Naive thymus-derived CD4-positive, alpha-beta T cell (primary cell): ENCODE measurements at regions of chr20 and their contacts with region 1.

Region 1: DNA sequence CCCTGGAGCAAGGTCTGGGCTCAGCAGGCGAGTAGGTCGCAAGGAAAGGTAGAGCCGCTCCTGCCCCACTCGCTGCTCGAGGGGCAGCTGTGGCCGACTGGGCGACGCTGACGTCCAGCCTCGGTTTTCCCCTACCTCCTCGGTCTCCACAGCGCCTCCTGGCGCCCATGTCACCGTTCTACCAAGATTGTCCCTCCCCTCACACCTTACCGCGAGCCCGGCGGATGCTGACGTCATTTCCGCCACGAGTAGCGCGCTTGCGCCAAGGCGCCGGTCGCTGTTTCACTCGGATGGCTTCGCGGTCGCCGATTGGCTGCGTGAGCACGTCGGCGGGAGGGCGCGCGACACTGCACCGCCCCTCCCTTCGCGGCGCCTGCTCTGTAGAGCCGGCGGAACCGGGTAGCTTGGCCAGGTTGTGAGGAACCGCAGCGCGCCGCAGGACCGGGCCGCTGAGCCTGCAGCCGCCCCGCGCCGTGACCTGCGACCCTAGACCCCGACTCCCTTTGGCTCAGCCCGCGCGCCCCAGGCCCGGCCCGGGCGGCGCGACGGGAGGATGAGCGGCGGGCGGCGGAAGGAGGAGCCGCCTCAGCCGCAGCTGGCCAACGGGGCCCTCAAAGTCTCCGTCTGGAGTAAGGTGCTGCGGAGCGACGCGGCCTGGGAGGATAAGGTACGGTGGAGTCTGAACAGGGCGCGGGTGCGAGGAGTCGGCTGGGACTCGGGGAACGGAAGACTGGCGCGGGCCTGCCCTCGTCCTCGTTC is at the start of gene RAB5IF:
- DNase-seq: peak; percentile 98 to 99 (median 99)
- ATAC-seq: peak; percentile 94
- H3K4me3 ChIP-seq: peak within 1 kb of the TSS; percentile 89
- H3K4me3 Mint-ChIP-seq: peak within 1 kb of the TSS; percentile 95 to 99 (median 96)
- H3K27ac ChIP-seq: peak within 1 kb of the TSS; percentile 91
- H3K27ac Mint-ChIP-seq: peak within 1 kb of the TSS; percentile 94 to 99 (median 96)
- H3K4me1 ChIP-seq: peaks cover 16 to 20% of the 10 kb centered on the region in 2 donors
- H3K4me1 Mint-ChIP-seq: peaks cover 12 to 38% (median 28%) of the 10 kb centered on the region in 7 donors
- H3K27me3 ChIP-seq: no peaks in the 10 kb centered on the region
- H3K27me3 Mint-ChIP-seq: peaks cover 0 to 3% (median 0%) of the 10 kb centered on the region in 5 donors
- total RNA-seq, gene RAB5IF: 47.9 to 100 (median 53.1) TPM

Region 2: GRCh38 chr20:34970193-34970840 is 1635.3 kb before region 1 on chr20:
- CTCF ChIA-PET with region 1: no interaction called
- POLR2A ChIA-PET with region 1: no interaction called
- intact Hi-C with region 1: no loop called
- DNase-seq: no peak
- ATAC-seq: no peak
- H3K4me3 ChIP-seq: no peak overlapping the region
- H3K4me3 Mint-ChIP-seq: no peak overlapping the region
- H3K27ac ChIP-seq: no peak overlapping the region
- H3K27ac Mint-ChIP-seq: no peak overlapping the region
- H3K4me1 ChIP-seq: no peaks in the 10 kb centered on the region
- H3K4me1 Mint-ChIP-seq: no peaks in the 10 kb centered on the region
- H3K27me3 ChIP-seq: no peaks in the 10 kb centered on the region
- H3K27me3 Mint-ChIP-seq: peaks cover 0 to 4% (median 2%) of the 10 kb centered on the region in 5 donors

Region 3: GRCh38 chr20:36184816-36185776 is 420.5 kb before region 1 on chr20:
- CTCF ChIA-PET with region 1: no interaction called
- POLR2A ChIA-PET with region 1: no interaction called
- intact Hi-C with region 1: no loop called
- DNase-seq: no peak
- ATAC-seq: no peak
- H3K4me3 ChIP-seq: no peak overlapping the region
- H3K4me3 Mint-ChIP-seq: no peak overlapping the region
- H3K27ac ChIP-seq: no peak overlapping the region
- H3K27ac Mint-ChIP-seq: no peak overlapping the region
- H3K4me1 ChIP-seq: no peaks in the 10 kb centered on the region
- H3K4me1 Mint-ChIP-seq: no peaks in the 10 kb centered on the region
- H3K27me3 ChIP-seq: no peaks in the 10 kb centered on the region
- H3K27me3 Mint-ChIP-seq: peaks cover 0 to 2% (median 0%) of the 10 kb centered on the region in 5 donors

Region 4: GRCh38 chr20:36199345-36200257 is 406.0 kb before region 1 on chr20:
- CTCF ChIA-PET with region 1: no interaction called
- POLR2A ChIA-PET with region 1: no interaction called
- intact Hi-C with region 1: loop called in 1 of 2 experiments (anchors 2 kb)
- DNase-seq: peak; percentile 31 to 74 (median 57)
- ATAC-seq: peak; percentile 83
- H3K4me3 ChIP-seq: no peak overlapping the region
- H3K4me3 Mint-ChIP-seq: no peak overlapping the region
- H3K27ac ChIP-seq: no peak overlapping the region
- H3K27ac Mint-ChIP-seq: no peak overlapping the region
- H3K4me1 ChIP-seq: peaks cover 0 to 5% of the 10 kb centered on the region in 2 donors
- H3K4me1 Mint-ChIP-seq: peaks cover 3 to 6% (median 5%) of the 10 kb centered on the region in 7 donors
- H3K27me3 ChIP-seq: no peaks in the 10 kb centered on the region
- H3K27me3 Mint-ChIP-seq: peaks cover 9 to 21% (median 12%) of the 10 kb centered on the region in 5 donors

Region 5: GRCh38 chr20:36562724-36563123 is 42.9 kb before region 1 on chr20:
- CTCF ChIA-PET with region 1: interaction called, 12 read pairs
- POLR2A ChIA-PET with region 1: interaction called, 93 read pairs
- intact Hi-C with region 1: no loop called
- DNase-seq: no peak
- ATAC-seq: no peak
- H3K4me3 ChIP-seq: no peak overlapping the region
- H3K4me3 Mint-ChIP-seq: no peak overlapping the region
- H3K27ac ChIP-seq: no peak overlapping the region
- H3K27ac Mint-ChIP-seq: peak overlapping the region in 1 of 9 donors; percentile 21
- H3K4me1 ChIP-seq: peaks cover 0 to 10% of the 10 kb centered on the region in 2 donors
- H3K4me1 Mint-ChIP-seq: peaks cover 0 to 5% (median 0%) of the 10 kb centered on the region in 7 donors
- H3K27me3 ChIP-seq: no peaks in the 10 kb centered on the region
- H3K27me3 Mint-ChIP-seq: no peaks in the 10 kb centered on the region

Region 6: GRCh38 chr20:36591854-36592641 is 13.5 kb before region 1 on chr20:
- CTCF ChIA-PET with region 1: interaction called, 20 read pairs
- POLR2A ChIA-PET with region 1: interaction called, 84 read pairs
- intact Hi-C with region 1: loop called (anchors 1 kb)
- DNase-seq: peak in 6 of 9 donors; percentile 23 to 61 (median 42)
- ATAC-seq: peak; percentile 40
- H3K4me3 ChIP-seq: no peak overlapping the region
- H3K4me3 Mint-ChIP-seq: peak overlapping the region in 7 of 10 donors; percentile 22 to 60 (median 42)
- H3K27ac ChIP-seq: peak overlapping the region; percentile 56
- H3K27ac Mint-ChIP-seq: peak overlapping the region; percentile 42 to 90 (median 88)
- H3K4me1 ChIP-seq: peaks cover 14 to 16% of the 10 kb centered on the region in 2 donors
- H3K4me1 Mint-ChIP-seq: peaks cover 33 to 61% (median 48%) of the 10 kb centered on the region in 7 donors
- H3K27me3 ChIP-seq: no peaks in the 10 kb centered on the region
- H3K27me3 Mint-ChIP-seq: no peaks in the 10 kb centered on the region

Region 7: GRCh38 chr20:36745927-36746659 is 140.5 kb after region 1 on chr20 and contains the start of gene NDRG3:
- CTCF ChIA-PET with region 1: no interaction called
- POLR2A ChIA-PET with region 1: interaction called, 5 read pairs
- intact Hi-C with region 1: loop called (anchors 1 kb)
- DNase-seq: peak; percentile 81 to 93 (median 91)
- ATAC-seq: peak; percentile 100
- H3K4me3 ChIP-seq: peak within 1 kb of the TSS; percentile 93
- H3K4me3 Mint-ChIP-seq: peak within 1 kb of the TSS; percentile 85 to 94 (median 90)
- H3K27ac ChIP-seq: peak within 1 kb of the TSS; percentile 70
- H3K27ac Mint-ChIP-seq: peak within 1 kb of the TSS; percentile 83 to 97 (median 88)
- H3K4me1 ChIP-seq: peaks cover 5 to 7% of the 10 kb centered on the region in 2 donors
- H3K4me1 Mint-ChIP-seq: peaks cover 20 to 41% (median 29%) of the 10 kb centered on the region in 7 donors
- H3K27me3 ChIP-seq: no peaks in the 10 kb centered on the region
- H3K27me3 Mint-ChIP-seq: no peaks in the 10 kb centered on the region
- total RNA-seq, gene NDRG3: 20.8 to 30.6 (median 28.9) TPM

Region 8: GRCh38 chr20:36895036-36895435 is 289.5 kb after region 1 on chr20:
- CTCF ChIA-PET with region 1: no interaction called
- POLR2A ChIA-PET with region 1: no interaction called
- intact Hi-C with region 1: no loop called
- DNase-seq: no peak
- ATAC-seq: peak; percentile 34
- H3K4me3 ChIP-seq: no peak overlapping the region
- H3K4me3 Mint-ChIP-seq: peak overlapping the region in 2 of 10 donors; percentile 3 to 4
- H3K27ac ChIP-seq: peak overlapping the region; percentile 29
- H3K27ac Mint-ChIP-seq: peak overlapping the region; percentile 20 to 90 (median 80)
- H3K4me1 ChIP-seq: no peaks in the 10 kb centered on the region
- H3K4me1 Mint-ChIP-seq: peaks cover 4 to 21% (median 15%) of the 10 kb centered on the region in 7 donors
- H3K27me3 ChIP-seq: no peaks in the 10 kb centered on the region
- H3K27me3 Mint-ChIP-seq: no peaks in the 10 kb centered on the region

Region 9: GRCh38 chr20:37527638-37528441 is 922.3 kb after region 1 on chr20 and contains the start of gene BLCAP:
- CTCF ChIA-PET with region 1: no interaction called
- POLR2A ChIA-PET with region 1: no interaction called
- intact Hi-C with region 1: loop called in 1 of 2 experiments (anchors 5 kb)
- DNase-seq: peak; percentile 89 to 98 (median 96)
- ATAC-seq: peak; percentile 96
- H3K4me3 ChIP-seq: peak within 1 kb of the TSS; percentile 86
- H3K4me3 Mint-ChIP-seq: peak within 1 kb of the TSS; percentile 81 to 95 (median 90)
- H3K27ac ChIP-seq: peak within 1 kb of the TSS; percentile 99
- H3K27ac Mint-ChIP-seq: peak within 1 kb of the TSS; percentile 98 to 100 (median 99)
- H3K4me1 ChIP-seq: peaks cover 30 to 35% of the 10 kb centered on the region in 2 donors
- H3K4me1 Mint-ChIP-seq: peaks cover 41 to 52% (median 46%) of the 10 kb centered on the region in 7 donors
- H3K27me3 ChIP-seq: no peaks in the 10 kb centered on the region
- H3K27me3 Mint-ChIP-seq: peaks cover 0 to 2% (median 0%) of the 10 kb centered on the region in 5 donors
- total RNA-seq, gene BLCAP: 42.1 to 94.7 (median 73.4) TPM